Colonic mucosa (tissue), 4 donors: ENCODE measurements at regions of chr14 and their contacts with region 1.

Region 1: GRCh38 chr14:56117765-56118610 is at the start of gene PELI2:
- DNase-seq: peak; percentile 67
- H3K4me3 ChIP-seq: peak within 1 kb of the TSS; percentile 70
- H3K27ac ChIP-seq: peak within 1 kb of the TSS; percentile 80
- H3K4me1 ChIP-seq: no peaks in the 10 kb centered on the region
- H3K27me3 ChIP-seq: no peaks in the 10 kb centered on the region
- CTCF ChIP-seq: no peak
- total RNA-seq, gene PELI2: 9.8 to 13.9 TPM

Region 2: GRCh38 chr14:55762595-55763232 is 355.3 kb before region 1 on chr14:
- intact Hi-C with region 1: no loop called
- DNase-seq: no peak
- H3K4me3 ChIP-seq: no peak overlapping the region
- H3K27ac ChIP-seq: no peak overlapping the region
- H3K4me1 ChIP-seq: no peaks in the 10 kb centered on the region
- H3K27me3 ChIP-seq: no peaks in the 10 kb centered on the region
- CTCF ChIP-seq: no peak

Region 3: DNA sequence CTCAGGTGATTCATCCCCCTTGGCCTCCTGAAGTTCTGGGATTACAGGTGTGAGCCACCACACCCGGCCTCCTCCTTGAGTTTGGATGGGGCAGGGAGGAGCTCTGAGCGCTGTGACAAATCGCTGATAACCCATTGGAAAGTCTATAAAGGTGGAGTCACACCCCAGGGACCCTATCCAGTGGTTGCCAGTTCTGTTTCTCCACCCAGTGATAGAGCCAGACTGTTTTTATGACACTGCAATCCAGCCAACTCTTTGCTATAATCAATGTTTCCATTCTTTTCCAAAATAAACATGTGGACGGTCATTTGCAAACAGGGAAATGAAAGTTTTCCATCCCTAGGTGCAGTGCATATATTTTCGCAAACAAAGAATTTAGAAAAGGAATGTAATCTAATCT is 141.8 kb before region 1 on chr14:
- intact Hi-C with region 1: loop called (anchors 10 kb)
- DNase-seq: peak; percentile 83
- H3K4me3 ChIP-seq: no peak overlapping the region
- H3K27ac ChIP-seq: peak overlapping the region; percentile 56
- H3K4me1 ChIP-seq: no peaks in the 10 kb centered on the region
- H3K27me3 ChIP-seq: no peaks in the 10 kb centered on the region
- CTCF ChIP-seq: no peak

Region 4: GRCh38 chr14:56324856-56325699 is 207.1 kb after region 1 on chr14:
- intact Hi-C with region 1: loop called (anchors 10 kb)
- DNase-seq: no peak
- H3K4me3 ChIP-seq: no peak overlapping the region
- H3K27ac ChIP-seq: no peak overlapping the region
- H3K4me1 ChIP-seq: no peaks in the 10 kb centered on the region
- H3K27me3 ChIP-seq: no peaks in the 10 kb centered on the region
- CTCF ChIP-seq: no peak